ENCODE measurements at regions of chr4 and their contacts with region 1.

Region 1: DNA sequence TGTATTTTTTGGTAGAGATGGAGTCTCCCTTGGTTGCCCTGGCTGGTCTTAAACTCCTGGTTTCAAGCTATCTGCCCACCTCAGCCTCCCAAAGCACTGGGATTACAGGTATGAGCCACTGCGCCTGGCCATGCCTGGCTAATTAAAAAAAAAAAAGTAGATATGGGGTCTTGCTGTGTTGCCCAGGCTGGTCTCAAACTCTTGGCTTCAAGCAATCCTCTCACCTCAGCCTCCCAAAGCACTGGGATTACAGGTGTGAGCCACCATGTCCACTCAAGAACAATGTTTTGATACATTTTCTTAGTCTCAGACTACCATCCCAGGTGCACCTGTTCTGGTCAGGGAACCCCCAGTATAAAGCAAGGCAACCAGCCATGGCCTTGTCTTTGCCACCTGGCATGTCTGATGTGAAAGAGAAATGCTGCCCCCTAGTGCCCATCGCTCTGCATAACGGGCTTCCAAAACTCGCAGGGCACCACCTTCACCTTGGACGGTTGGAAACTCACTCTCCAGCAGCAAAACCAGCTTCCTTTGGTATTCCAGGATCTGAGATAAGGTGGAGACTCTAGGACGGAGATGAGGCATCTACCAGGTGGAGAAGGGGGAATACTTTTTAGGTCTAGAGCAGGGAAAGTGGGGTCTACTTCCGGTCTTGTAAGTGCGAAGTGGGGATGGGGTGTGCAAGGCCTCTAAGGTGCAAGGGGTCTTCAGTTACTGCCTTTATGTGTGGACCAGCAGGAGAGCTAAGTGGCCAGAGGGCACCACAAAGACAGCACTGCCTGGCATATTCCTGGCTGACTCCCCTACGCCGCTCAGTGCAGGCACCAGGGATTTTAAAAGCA is 47.7 kb upstream of the AFAP1 start:
- DNase-seq: peak; percentile 87
- ATAC-seq: peak; percentile 81
- H3K4me3 Mint-ChIP-seq: no peak overlapping the region
- H3K27ac Mint-ChIP-seq: peak overlapping the region; percentile 69; the same call in 1 of the 2 replicates
- H3K4me1 Mint-ChIP-seq: peaks cover 21% of the 10 kb centered on the region
- H3K27me3 Mint-ChIP-seq: no peaks in the 10 kb centered on the region
- CTCF ChIP-seq: peak; percentile 91

Region 2: GRCh38 chr4:7761720-7762119 is 225.6 kb before region 1 on chr4:
- CTCF ChIA-PET with region 1: interaction called, 19 read pairs
- POLR2A ChIA-PET with region 1: no interaction called
- DNase-seq: peak; percentile 80
- ATAC-seq: peak; percentile 91
- H3K4me3 Mint-ChIP-seq: no peak overlapping the region
- H3K27ac Mint-ChIP-seq: no peak overlapping the region
- H3K4me1 Mint-ChIP-seq: no peaks in the 10 kb centered on the region
- H3K27me3 Mint-ChIP-seq: no peaks in the 10 kb centered on the region
- CTCF ChIP-seq: peak; percentile 78

Region 3: GRCh38 chr4:7939377-7940108 is 47.8 kb before region 1 on chr4 and contains the start of gene AFAP1:
- CTCF ChIA-PET with region 1: interaction called, 25 read pairs
- POLR2A ChIA-PET with region 1: no interaction called
- DNase-seq: peak; percentile 94
- ATAC-seq: peak; percentile 91
- H3K4me3 Mint-ChIP-seq: peak within 1 kb of the TSS; percentile 77
- H3K27ac Mint-ChIP-seq: no peak within 1 kb of the TSS
- H3K4me1 Mint-ChIP-seq: peaks cover 47% of the 10 kb centered on the region
- H3K27me3 Mint-ChIP-seq: peaks cover 5% of the 10 kb centered on the region
- CTCF ChIP-seq: no peak
- total RNA-seq, gene AFAP1: 17.6 to 23.6 TPM (median 18.0 TPM) in 3 replicates

Region 4: DNA sequence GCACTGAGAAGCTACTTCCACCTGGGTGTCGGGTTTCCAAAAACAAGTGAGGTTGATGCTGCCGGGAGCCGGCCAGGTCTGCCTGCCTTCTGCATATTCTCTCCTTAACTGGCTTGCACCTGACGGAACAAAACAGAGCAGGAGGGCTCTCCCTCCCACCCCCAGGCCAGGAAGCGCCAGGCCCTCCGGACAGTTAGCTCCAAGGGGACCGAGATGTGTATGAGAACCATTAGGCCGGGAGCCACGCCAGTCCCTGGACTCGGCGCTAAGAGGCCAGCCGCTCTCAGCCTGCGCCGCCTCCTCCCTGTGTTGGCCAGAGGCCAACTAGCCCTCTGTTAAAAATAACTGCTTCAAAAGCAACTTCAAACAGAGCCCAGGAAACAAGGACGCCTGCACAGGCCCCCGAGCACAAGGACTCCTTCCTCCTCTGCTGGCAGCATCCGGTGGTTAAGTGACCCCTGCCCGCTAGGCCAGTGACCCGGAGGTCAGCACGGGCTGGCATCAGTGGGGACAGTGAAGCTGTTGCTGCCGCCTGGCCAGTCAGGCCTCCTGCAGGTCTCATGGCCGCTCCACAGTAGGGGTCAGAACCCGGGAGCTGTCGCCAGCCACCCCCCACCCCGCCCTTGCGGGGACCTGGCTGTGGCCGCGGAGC is 63.3 kb after region 1 on chr4:
- CTCF ChIA-PET with region 1: interaction called, 10 read pairs
- POLR2A ChIA-PET with region 1: no interaction called
- DNase-seq: peak; percentile 81
- ATAC-seq: peak; percentile 73
- H3K4me3 Mint-ChIP-seq: peak overlapping the region; percentile 43; the same call in 1 of the 2 replicates
- H3K27ac Mint-ChIP-seq: peak overlapping the region; percentile 99
- H3K4me1 Mint-ChIP-seq: peaks cover 53% of the 10 kb centered on the region
- H3K27me3 Mint-ChIP-seq: peaks cover 4% of the 10 kb centered on the region; the same call in 1 of the 2 replicates
- CTCF ChIP-seq: no peak

Measured in WTC11 (cell line).